Heart left ventricle (tissue), 16 donors: ENCODE measurements at regions of chr4 and their contacts with region 1.

Region 1: GRCh38 chr4:140861359-140862176 is 105.4 kb upstream of the TBC1D9 start:
- DNase-seq: peak in 4 of 5 donors; percentile 52 to 69 (median 60)
- ATAC-seq: peak; percentile 53 to 68 (median 62)
- H3K4me3 ChIP-seq: no peak overlapping the region
- H3K27ac ChIP-seq: peak overlapping the region in 5 of 12 donors; percentile 20 to 59 (median 40)
- H3K4me1 ChIP-seq: peaks cover 0 to 22% (median 10%) of the 10 kb centered on the region in 12 donors
- H3K27me3 ChIP-seq: no peaks in the 10 kb centered on the region
- CTCF ChIP-seq: peak; percentile 64 to 86 (median 78)
- POLR2A ChIP-seq: no peak

Region 2: DNA sequence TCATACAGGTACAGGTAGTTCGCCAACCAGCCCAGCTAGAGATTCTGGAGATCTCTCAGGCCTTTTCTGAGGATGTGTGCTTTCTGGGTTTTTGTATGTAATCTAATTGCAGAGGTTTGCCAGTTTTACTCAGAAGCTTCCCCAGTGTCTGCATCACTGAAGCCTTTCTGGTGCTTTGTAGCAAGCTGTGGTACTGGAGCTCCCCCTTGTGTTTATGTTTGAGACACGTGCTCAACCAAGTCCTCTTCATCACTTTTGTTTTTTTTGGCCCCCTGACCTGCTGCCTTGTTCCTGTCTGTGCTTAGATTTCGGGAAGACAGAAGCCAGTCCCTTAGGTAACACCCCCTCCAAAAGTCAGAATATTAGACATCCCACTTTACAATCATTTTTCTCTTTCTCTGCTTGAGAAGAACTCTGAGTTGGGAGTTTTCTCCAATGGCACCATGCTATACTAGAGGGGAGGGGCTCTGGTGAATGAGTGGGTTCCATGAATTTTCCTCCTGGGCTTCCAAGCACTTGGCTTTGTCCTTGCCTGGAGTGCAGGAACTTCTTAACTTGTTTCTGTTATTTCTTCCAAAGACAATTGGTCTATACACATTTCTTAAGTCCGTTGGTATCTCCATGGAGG is 23.0 kb after region 1 on chr4:
- intact Hi-C with region 1: loop called in 5 of 10 experiments (anchors 1 to 2 kb)
- DNase-seq: peak in 4 of 5 donors; percentile 39 to 60 (median 44)
- ATAC-seq: peak; percentile 47 to 72 (median 70)
- H3K4me3 ChIP-seq: no peak overlapping the region
- H3K27ac ChIP-seq: peak overlapping the region in 1 of 12 donors; percentile 30
- H3K4me1 ChIP-seq: peaks cover 0 to 16% (median 3%) of the 10 kb centered on the region in 12 donors
- H3K27me3 ChIP-seq: no peaks in the 10 kb centered on the region
- CTCF ChIP-seq: peak; percentile 50 to 71 (median 61)
- POLR2A ChIP-seq: no peak

Region 3: DNA sequence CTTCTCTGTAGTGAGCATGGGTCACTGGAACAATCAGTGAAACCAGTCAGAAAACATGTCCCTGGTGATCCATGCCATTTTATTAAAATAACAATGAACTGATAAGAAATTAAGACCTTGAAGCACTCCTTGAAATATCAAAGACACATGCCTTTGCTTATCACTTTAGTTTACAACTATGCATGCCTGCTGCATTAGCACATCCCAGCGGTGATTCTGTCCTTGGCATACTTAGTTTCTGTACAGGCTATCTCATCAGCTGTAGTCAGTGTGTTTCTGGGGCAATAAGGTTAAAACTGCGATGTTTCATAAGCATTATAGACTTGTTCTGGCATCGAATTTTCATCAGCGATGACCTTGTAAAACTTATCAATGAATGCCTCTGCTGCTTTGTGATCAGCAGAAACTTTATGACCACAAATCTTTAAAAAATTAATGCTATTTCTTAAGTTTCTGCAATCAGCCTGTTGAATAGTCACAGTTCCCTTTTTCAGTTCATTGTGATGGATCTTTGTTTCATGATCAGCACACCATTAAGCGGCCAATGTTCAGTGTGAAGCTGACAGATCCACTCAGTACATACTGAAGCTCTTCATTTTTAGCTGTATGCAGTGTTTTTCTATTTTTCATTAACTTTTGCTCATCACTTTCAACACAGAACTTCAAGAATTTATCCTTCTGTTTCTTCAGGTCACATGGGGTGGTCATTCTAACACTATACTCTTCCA is 121.2 kb after region 1 on chr4:
- intact Hi-C with region 1: loop called in 4 of 10 experiments (anchors 10 kb)
- DNase-seq: no peak
- ATAC-seq: peak; percentile 76 to 87 (median 83)
- H3K4me3 ChIP-seq: no peak overlapping the region
- H3K27ac ChIP-seq: peak overlapping the region in 9 of 12 donors; percentile 29 to 77 (median 46)
- H3K4me1 ChIP-seq: peaks cover 0 to 45% (median 15%) of the 10 kb centered on the region in 12 donors
- H3K27me3 ChIP-seq: no peaks in the 10 kb centered on the region
- CTCF ChIP-seq: no peak
- POLR2A ChIP-seq: no peak

Region 4: DNA sequence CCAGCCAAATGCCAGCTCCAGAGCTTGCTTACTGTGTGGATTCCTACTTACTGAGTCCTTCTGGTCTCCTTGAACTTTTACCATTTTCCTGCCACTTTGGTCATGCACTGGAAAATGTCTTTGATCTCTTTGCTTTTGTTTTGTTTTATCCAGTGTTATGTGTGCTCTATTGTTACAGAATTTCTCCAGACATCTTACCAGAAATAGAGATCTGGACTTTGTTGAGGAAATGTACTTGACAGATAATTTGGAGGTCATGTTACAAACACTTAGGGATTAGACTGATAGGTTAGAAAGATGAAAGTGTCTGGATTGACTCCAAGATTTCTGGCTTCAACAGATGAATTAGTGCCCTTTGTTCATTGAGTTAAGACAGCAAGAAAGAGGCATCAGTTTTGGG is 353.5 kb after region 1 on chr4:
- intact Hi-C with region 1: loop called in 2 of 10 experiments (anchors 5 to 10 kb)
- DNase-seq: no peak
- ATAC-seq: peak in 1 of 4 donors; percentile 11
- H3K4me3 ChIP-seq: no peak overlapping the region
- H3K27ac ChIP-seq: peak overlapping the region in 5 of 12 donors; percentile 14 to 53 (median 42)
- H3K4me1 ChIP-seq: peaks cover 0 to 23% (median 2%) of the 10 kb centered on the region in 12 donors
- H3K27me3 ChIP-seq: no peaks in the 10 kb centered on the region
- CTCF ChIP-seq: no peak
- POLR2A ChIP-seq: no peak